ENCODE measurements at regions of chr14 and their contacts with region 1.

Region 1: DNA sequence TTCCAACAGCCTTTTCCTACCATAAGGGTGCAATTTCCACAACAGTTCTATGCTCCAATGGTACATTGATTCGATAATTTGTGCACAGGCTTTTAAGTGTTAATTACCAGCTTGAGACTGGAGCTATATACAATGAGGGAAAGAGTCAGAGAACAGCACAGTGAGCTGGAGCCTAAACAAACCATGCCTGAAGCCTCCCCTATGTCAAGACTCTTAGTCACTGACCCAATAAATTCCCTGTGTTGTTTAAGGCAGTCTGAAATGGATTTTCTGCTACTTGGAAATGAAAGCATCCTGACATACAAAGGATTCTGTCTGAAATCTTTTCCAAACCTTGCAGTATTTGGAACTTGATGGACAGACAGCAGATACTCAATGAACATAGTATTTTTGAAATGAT is 149.0 kb downstream of the EFCAB11 start:
- DNase-seq: no peak
- CTCF ChIP-seq: no peak

Region 2: DNA sequence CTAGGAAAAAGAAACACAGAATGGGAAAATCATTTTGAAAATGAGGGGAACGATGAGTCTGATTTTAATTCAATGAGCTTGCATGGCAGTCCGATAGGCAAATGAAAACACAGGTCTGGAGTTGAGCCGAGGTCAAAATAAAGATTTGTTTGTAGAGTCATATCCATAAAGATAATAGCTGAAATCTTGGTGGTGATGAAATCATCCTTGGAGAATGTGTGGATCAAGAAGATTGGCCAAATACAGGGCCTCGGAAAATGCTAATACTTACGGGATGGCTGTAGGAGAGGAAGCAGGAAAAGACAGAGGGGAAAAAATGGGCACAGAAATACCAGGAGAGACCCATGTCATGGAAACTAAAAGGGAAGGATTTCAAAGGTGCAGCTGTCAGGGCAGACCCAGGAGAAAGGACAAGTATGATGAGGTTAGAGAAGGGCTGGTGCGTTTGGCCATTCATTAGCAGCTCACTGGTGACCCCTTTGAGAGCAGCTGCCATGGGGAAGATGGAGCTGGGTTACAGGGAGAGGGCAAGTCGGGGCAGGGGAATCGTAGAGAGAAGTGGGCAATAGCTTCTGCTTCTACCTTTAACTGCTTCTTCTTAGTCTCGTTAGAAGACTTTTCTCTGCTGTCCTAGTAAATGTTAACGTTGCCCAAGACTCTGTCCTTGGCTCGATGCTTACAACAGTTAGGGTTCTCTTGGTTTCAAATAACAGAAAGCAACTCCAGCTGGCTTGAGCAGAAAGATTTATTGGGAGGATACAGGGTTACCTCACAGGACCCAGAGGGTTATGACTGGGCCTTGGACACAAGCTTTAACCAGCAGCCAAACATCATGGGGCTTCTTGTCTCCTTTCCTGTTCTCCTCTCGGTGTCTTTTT is 12.8 kb before region 1 on chr14:
- CTCF ChIA-PET with region 1: interaction called, 10 read pairs
- POLR2A ChIA-PET with region 1: no interaction called
- DNase-seq: no peak
- CTCF ChIP-seq: no peak

Region 3: GRCh38 chr14:90454041-90455000 is 648.8 kb after region 1 on chr14:
- CTCF ChIA-PET with region 1: no interaction called
- POLR2A ChIA-PET with region 1: no interaction called
- DNase-seq: no peak
- CTCF ChIP-seq: no peak

Measured in GM10248 (cell line).